ENCODE measurements at regions of chr3 and their contacts with region 1.

Region 1: DNA sequence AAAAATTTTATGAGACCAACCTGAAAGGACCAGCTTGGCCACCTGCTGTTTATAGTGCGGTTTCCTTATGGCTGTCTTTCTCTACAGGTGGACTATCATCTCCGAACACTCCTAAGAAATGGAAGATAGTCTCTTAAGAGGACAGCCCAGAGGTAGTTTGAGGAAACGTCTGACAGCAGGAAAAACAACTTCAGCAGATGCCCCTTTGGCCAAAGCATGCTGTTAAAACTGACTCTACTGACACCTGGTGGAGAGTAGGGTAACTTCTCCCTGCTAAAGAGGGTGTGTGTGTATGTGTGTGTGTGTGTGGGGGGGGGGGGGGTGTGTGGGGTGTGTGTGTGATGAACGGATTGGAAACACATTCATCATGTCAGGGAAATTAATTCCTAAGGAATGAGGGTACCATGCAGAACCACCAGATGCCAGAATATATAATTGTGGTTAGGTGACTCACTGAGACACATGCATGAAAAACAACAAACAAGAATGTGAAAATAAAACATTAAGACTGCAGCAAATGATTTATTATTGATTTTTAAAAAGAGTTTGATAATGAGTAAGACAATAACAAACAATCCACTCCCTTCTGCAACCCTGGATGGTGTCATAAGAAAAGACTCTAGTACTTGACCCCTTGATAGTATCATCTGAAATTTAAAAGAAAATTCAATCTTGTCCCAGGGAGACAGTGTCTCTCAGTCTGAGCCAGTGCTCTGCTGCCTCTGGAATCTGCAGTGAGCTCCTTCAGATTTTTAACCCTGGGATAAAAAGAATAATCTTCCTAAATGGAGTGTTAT is 256.5 kb downstream of the THRB start:
- DNase-seq: peak; percentile 44
- CTCF ChIP-seq: peak; percentile 71

Region 2: DNA sequence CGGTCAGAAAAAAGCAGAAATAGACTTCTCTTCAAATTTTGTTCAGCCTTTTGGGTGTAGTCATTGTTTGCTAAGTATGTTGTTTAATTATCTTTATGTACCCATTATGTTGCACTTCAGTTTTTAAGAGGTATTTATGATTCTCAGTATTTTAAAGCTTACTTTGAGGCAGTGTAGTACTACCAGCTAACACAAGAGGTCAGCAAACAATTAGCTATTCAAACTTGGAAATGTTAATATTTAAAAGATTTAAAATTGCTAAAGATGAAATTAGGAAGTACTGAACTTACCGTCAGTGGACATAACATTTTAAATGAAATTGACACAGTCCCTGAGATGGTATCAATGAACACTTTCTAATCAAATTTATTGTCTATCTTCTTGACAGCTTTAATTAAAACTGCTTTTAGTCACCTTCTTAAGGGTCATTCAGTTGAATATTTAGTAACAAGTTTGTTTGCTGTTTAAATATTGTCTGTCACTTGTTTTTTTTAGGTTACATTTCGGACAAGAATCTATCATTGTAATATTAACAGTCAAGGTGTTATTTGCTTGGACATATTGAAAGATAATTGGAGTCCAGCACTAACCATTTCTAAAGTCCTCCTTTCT is 349.4 kb before region 1 on chr3:
- in situ Hi-C with region 1: loop called (anchors 25 kb)
- DNase-seq: no peak
- CTCF ChIP-seq: peak; percentile 69

Region 3: GRCh38 chr3:23999012-23999641 is 239.0 kb before region 1 on chr3:
- in situ Hi-C with region 1: loop called (anchors 25 kb)
- DNase-seq: peak; percentile 56
- CTCF ChIP-seq: peak; percentile 96